WTC11 (cell line): ENCODE measurements at regions of chr10 and their contacts with region 1.

Region 1: DNA sequence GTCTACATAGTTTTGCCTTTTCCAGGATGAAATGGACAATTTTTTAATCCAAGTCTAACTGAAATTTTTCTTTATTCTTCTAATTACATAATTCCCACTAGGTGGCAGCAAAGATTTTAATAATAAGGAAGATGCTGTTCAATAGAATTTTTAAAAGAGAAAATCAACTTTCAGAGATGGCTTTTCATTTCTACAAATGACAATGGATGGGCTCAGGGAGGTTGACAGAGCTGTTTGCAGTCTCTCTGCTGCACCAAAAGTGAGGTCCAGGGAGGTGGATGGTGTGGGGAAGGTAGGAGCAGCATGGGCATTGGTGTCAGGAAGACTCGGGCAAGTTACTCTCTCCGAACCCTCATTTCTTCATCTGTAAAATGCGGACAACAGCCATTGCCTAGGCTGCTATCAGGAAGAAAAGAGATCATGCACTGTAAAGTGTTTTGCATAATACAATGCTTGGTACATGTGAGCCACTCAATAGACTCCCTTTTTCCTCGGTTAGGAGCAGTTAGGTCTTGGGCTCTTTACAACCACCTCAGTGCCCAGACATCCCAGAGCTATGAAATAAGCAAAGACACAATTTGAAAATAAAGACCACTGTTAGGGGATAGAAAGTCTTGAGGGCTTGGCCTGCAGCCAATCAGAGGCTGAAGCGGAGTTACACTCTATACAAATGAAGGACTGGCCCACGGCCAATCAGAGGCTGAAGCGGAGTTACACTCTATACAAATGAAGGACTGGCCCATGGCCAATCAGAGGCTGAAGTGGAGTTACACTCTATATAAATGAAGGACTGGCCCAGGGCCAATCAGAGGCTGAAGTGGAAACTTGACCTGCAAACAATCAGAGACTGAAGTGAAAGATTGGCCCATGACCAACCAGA is 107.1 kb downstream of the ABLIM1 start:
- DNase-seq: no peak
- ATAC-seq: peak; percentile 65
- H3K4me3 Mint-ChIP-seq: no peak overlapping the region
- H3K27ac Mint-ChIP-seq: no peak overlapping the region
- H3K4me1 Mint-ChIP-seq: no peaks in the 10 kb centered on the region
- H3K27me3 Mint-ChIP-seq: no peaks in the 10 kb centered on the region
- CTCF ChIP-seq: peak; percentile 29; the same call in 1 of the 2 replicates

Region 2: DNA sequence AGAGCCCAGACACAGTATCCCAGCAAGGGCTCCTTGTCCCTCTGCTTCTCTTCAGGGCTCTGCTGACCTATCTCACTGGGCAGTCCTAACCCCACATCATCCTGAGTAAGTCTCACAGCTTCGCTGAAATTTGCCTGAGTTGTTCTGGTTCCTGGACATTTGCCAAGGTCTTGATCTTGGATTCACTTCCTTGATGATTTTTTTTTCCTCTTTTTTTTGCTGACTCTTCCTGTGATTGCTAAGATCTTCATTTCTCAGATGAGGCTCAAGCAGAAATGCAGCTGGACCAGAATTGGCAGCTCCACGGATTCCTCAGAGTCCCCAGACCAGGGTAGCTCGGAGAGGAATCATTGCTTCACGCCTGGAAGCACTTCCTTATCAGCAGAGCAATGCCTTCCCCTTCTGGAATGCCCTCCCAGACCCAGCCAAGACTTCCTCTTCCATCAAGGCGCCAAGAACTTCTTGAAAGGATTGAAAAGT is 138.0 kb before region 1 on chr10:
- CTCF ChIA-PET with region 1: no interaction called
- POLR2A ChIA-PET with region 1: no interaction called
- DNase-seq: no peak
- ATAC-seq: no peak
- H3K4me3 Mint-ChIP-seq: no peak overlapping the region
- H3K27ac Mint-ChIP-seq: no peak overlapping the region
- H3K4me1 Mint-ChIP-seq: peaks cover 24% of the 10 kb centered on the region
- H3K27me3 Mint-ChIP-seq: peaks cover 10% of the 10 kb centered on the region
- CTCF ChIP-seq: no peak

Region 3: DNA sequence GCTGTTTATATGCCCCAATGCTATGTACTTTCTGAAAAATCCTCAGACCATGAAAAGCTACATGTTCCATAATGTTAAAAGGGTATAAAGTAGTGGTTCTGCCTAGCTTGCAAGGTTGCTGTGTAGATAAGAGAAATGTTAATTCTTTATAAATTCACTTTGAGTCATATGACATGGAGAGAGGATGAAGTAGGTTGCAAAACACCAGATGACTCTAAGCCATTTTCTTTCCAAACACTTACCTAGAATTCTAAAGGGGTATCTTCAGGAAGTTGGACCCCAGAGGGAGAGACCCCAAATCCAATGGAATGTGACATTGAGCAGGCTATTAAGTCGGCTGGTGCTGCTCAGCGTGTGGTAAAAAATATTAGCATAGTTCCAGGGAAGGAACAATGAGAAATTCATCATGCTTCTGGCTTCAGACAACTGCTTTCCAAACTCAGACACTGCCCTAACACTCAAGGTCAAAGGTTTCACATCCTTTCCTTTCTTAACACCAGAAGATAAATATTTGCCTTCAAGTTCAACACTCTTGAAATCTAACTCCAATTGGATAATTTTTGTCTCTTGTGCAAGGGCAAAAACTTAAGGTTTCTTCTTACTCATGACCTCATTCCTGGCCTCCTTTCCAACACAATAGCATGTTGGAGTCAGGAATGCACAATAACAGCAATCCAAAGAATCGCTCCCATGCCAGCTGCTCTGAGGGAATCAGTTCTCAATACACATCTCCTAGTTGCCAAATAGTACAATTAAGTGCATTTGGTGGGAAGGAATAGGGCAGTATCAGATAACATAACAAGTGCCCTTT is 46.0 kb before region 1 on chr10:
- CTCF ChIA-PET with region 1: no interaction called
- POLR2A ChIA-PET with region 1: no interaction called
- DNase-seq: no peak
- ATAC-seq: peak; percentile 57
- H3K4me3 Mint-ChIP-seq: no peak overlapping the region
- H3K27ac Mint-ChIP-seq: peak overlapping the region; percentile 42; the same call in 1 of the 2 replicates
- H3K4me1 Mint-ChIP-seq: peaks cover 29% of the 10 kb centered on the region
- H3K27me3 Mint-ChIP-seq: no peaks in the 10 kb centered on the region
- CTCF ChIP-seq: no peak

Region 4: DNA sequence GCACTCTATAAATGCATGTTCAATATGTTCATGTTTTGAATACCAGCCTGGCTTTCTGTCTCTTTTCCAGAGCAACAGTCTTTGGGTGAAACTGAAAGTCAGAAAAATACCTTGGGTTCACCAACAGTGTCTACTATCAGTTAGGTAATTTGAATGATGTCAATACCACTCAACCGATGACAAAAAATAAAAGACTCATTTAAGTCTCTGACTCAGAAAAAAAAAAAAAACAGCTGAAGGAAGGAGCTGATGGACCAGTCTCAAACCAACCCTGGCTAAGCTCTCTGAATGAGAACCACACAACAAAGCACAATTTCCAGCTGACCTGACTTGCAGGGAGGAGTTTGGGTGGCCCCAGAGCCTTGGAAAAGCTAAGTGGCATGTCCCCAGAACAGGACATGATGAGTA is 64.6 kb after region 1 on chr10:
- CTCF ChIA-PET with region 1: no interaction called
- POLR2A ChIA-PET with region 1: no interaction called
- DNase-seq: no peak
- ATAC-seq: no peak
- H3K4me3 Mint-ChIP-seq: no peak overlapping the region
- H3K27ac Mint-ChIP-seq: no peak overlapping the region
- H3K4me1 Mint-ChIP-seq: peaks cover 19% of the 10 kb centered on the region
- H3K27me3 Mint-ChIP-seq: no peaks in the 10 kb centered on the region
- CTCF ChIP-seq: no peak

Region 5: GRCh38 chr10:114694752-114695151 is 143.8 kb after region 1 on chr10:
- CTCF ChIA-PET with region 1: interaction called, 17 read pairs
- POLR2A ChIA-PET with region 1: no interaction called
- DNase-seq: peak; percentile 71
- ATAC-seq: peak; percentile 88
- H3K4me3 Mint-ChIP-seq: no peak overlapping the region
- H3K27ac Mint-ChIP-seq: no peak overlapping the region
- H3K4me1 Mint-ChIP-seq: peaks cover 25% of the 10 kb centered on the region
- H3K27me3 Mint-ChIP-seq: no peaks in the 10 kb centered on the region
- CTCF ChIP-seq: peak; percentile 64